Caco-2 (cell line): ENCODE measurements at regions of chr3 and their contacts with region 1.

Region 1: DNA sequence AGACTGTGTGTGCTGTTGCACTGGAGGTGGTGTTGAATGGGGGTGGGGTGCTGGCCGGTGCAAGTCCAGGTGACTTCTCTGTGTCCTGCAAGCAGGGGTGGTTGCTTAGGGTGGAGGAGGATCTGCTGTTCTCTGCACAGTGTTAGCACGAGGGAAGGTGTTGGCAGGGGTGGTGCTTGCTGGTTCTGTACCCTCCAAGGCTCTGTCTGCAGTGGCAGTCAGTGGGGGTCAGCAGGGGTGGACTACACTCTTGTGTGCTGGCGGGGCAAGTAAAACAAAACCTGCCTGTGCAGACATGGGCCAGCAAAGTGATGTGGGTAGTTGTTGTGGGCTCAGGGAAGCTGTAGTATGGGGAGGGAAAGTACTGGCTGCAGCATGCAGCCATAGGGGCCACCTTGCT is 5.5 kb downstream of the ROPN1 start:
- DNase-seq: no peak
- H3K4me3 ChIP-seq: no peak overlapping the region
- H3K4me3 Mint-ChIP-seq: no peak overlapping the region
- H3K27ac Mint-ChIP-seq: no peak overlapping the region
- H3K4me1 ChIP-seq: no peaks in the 10 kb centered on the region
- H3K4me1 Mint-ChIP-seq: no peaks in the 10 kb centered on the region
- H3K27me3 ChIP-seq: 0 out of 2 replicates have a peak, but pooled peaks cover 1% of the 10 kb centered on the region
- H3K27me3 Mint-ChIP-seq: peaks cover 23% of the 10 kb centered on the region
- CTCF ChIP-seq: no peak

Region 2: DNA sequence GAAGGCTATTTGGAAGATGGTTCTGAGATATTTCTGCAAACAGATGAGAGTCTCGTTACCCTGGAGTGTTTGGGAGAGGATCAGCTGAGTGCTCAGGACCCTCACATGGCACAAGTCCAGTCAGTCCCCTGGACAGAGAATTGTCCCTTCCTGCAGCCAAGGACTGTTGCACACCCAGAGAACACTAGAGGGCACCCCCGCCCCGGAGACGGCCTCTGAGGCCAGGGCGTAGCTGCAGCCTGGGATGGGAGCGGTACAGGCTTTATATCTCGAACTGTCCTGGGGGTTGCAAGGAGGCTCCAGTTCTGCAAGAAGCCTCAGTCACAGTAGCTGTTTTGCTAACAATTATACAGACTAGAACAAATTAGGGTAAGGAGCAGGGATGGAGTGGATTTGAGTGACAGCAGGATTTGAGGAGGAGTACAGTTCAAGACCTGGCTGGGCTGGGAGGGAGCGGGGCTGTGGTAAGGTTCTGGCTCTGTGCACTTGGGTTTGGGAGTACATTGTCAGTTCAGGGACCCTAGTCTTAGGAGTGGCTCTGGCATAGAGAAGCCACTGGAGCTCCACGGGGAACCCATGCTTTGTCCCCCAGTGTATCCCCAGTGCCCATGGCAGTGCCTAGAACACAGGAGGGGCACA is 334.0 kb before region 1 on chr3:
- CTCF ChIA-PET with region 1: no interaction called
- POLR2A ChIA-PET with region 1: no interaction called
- intact Hi-C with region 1: loop called (anchors 10 kb)
- DNase-seq: peak; percentile 77 to 90
- H3K4me3 ChIP-seq: no peak overlapping the region
- H3K4me3 Mint-ChIP-seq: no peak overlapping the region
- H3K27ac Mint-ChIP-seq: no peak overlapping the region
- H3K4me1 ChIP-seq: no peaks in the 10 kb centered on the region; the same call in 1 of the 2 replicates
- H3K4me1 Mint-ChIP-seq: peaks cover 15% of the 10 kb centered on the region
- H3K27me3 ChIP-seq: no peaks in the 10 kb centered on the region
- H3K27me3 Mint-ChIP-seq: no peaks in the 10 kb centered on the region
- CTCF ChIP-seq: peak; percentile 87 to 96

Region 3: GRCh38 chr3:123745184-123745855 is 241.1 kb before region 1 on chr3:
- CTCF ChIA-PET with region 1: no interaction called
- POLR2A ChIA-PET with region 1: no interaction called
- intact Hi-C with region 1: loop called (anchors 10 kb)
- DNase-seq: peak in 1 of 2 experiments; percentile 31
- H3K4me3 ChIP-seq: no peak overlapping the region
- H3K4me3 Mint-ChIP-seq: no peak overlapping the region
- H3K27ac Mint-ChIP-seq: no peak overlapping the region
- H3K4me1 ChIP-seq: peaks cover 10% of the 10 kb centered on the region
- H3K4me1 Mint-ChIP-seq: peaks cover 7% of the 10 kb centered on the region
- H3K27me3 ChIP-seq: no peaks in the 10 kb centered on the region
- H3K27me3 Mint-ChIP-seq: no peaks in the 10 kb centered on the region
- CTCF ChIP-seq: peak; percentile 9 to 43